IMR-90 (cell line): ENCODE measurements at regions of chr1 and their contacts with region 1.

Region 1: DNA sequence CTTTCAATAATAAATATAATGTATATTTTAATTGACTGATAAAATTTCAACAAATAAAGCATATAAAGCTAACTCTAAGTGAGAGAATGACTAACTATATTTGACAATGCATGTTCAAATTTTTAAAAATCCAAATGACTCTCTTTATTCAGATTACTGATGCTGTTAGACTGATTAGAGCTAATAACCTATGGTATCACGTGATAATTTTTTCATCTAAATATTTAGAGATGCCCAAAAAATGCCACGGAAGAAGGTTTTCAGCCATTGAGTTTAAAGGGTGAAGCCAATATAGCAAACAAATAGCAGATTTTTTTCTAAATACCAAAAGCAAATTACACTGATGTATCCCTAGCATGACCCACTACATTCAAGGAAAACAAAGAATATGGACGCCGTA is 61.1 kb upstream of the OR10J4 start:
- DNase-seq: no peak
- ATAC-seq: no peak
- H3K4me3 ChIP-seq: no peak overlapping the region
- H3K27ac ChIP-seq: no peak overlapping the region
- H3K4me1 ChIP-seq: no peaks in the 10 kb centered on the region
- H3K27me3 ChIP-seq: no peaks in the 10 kb centered on the region
- CTCF ChIP-seq: no peak
- POLR2A ChIP-seq: no peak
- RAD21 ChIP-seq: no peak

Region 2: DNA sequence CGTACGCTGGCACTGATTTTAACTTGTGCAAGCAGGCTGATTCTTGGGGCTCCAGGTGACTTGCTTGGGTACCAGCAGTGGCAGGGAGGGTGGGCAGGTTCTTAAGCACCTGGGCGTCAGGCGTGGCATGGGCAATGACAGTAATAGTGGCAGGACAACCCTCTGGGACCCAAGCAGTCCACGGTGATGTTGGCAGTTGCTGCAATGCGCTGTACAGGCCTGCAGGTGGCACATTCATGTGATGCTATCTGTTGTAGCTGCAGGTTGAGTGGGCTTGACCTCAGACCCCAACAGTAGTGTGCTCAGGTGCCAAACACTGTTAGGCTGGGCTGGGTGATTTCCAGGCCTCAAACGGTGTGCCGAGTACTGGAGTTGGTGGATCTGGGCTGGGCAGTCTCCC is 51.0 kb after region 1 on chr1:
- CTCF ChIA-PET with region 1: no interaction called
- POLR2A ChIA-PET with region 1: no interaction called
- dilution Hi-C with region 1: no loop called
- in situ Hi-C with region 1: no loop called
- intact Hi-C with region 1: loop called (anchors 2 kb)
- DNase-seq: no peak
- ATAC-seq: no peak
- H3K4me3 ChIP-seq: no peak overlapping the region
- H3K27ac ChIP-seq: no peak overlapping the region
- H3K4me1 ChIP-seq: no peaks in the 10 kb centered on the region
- H3K27me3 ChIP-seq: no peaks in the 10 kb centered on the region
- CTCF ChIP-seq: 0 out of 2 replicates have a peak, but pooled peaks have one; percentile 4
- POLR2A ChIP-seq: no peak
- RAD21 ChIP-seq: no peak